Calu3 (cell line): ENCODE measurements at regions of chr1 and their contacts with region 1.

Region 1: DNA sequence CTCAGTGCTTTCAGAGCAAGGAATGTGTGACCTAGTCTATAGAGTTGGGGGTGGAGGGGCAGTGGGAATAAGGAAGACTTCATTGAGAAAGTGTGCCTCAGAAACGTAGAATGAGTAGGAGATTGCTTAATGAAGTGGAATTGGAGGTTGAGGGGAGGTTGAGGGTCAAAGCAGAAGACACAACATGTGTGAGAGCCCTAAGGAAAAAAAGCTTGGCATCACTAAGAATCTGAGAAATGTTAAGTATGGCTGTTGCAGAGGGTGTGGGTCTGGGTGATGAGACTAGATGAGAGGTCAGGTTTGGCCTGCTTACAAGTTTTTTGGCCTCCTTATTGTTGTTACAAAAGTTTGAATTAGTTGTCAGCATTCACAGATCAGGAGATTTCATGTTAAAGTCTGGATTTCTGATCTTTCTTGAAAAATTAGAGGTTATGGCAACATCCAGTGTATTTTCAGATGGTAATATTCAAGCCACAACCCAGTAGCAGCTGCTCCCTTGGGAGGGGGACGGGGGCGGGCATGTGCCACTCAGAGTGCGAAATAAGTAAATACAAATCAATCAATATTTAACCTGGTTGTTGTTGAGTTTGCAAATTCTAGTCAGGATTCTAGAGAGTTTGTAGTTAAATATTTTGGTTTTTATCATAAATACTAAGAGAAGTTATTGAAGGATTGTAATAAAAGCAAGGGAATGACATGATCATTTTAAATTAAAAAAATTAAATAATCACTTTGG is 4.3 kb downstream of the MAN1A2 start:
- DNase-seq: no peak
- H3K4me3 Mint-ChIP-seq: peak overlapping the region; percentile 51
- H3K27ac Mint-ChIP-seq: no peak overlapping the region
- H3K4me1 Mint-ChIP-seq: peaks cover 18% of the 10 kb centered on the region
- H3K27me3 Mint-ChIP-seq: no peaks in the 10 kb centered on the region
- CTCF ChIP-seq: no peak

Region 2: DNA sequence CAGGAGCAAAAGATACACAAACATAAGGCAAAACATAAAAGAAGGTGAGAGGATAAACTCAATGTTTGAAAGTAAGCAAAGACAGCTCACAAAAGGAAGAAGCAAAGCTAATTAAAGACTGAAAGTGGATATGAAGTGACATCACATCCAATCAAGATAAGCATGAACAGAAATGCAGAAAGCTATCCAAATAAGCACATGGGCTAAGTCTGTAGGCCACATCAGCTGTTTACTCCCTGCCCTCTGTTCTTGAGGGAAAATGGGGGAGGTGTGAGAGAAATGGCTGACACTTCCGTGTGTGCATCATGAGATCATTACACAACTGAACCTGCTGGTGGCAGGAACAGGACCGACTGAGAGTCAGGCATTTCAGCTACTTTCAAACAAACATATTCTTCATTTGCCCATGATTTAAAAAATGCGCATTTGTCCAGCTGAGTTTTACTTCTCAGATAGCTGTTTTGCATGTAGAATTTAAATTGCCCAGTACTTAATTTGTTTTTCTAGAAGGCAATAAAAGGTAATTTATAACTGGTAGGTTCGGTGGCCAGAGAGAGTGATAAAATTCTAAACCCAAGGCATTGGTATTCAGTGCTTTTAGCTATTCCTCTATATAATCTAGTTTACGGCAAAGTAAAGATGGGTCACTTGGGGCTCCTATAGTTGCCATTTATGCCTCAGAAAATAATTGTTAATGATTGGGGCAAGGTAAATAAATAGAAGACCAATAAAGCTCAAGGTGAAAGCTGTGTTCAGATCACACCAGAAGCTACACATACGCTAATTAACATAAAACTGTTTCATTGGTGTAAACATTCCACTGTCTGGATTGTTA is 31.5 kb before region 1 on chr1:
- CTCF ChIA-PET with region 1: interaction called, 4 read pairs
- intact Hi-C with region 1: loop called (anchors 1 kb)
- DNase-seq: peak; percentile 29
- H3K4me3 Mint-ChIP-seq: no peak overlapping the region
- H3K27ac Mint-ChIP-seq: peak overlapping the region; percentile 85
- H3K4me1 Mint-ChIP-seq: peaks cover 10% of the 10 kb centered on the region
- H3K27me3 Mint-ChIP-seq: no peaks in the 10 kb centered on the region
- CTCF ChIP-seq: no peak

Region 3: DNA sequence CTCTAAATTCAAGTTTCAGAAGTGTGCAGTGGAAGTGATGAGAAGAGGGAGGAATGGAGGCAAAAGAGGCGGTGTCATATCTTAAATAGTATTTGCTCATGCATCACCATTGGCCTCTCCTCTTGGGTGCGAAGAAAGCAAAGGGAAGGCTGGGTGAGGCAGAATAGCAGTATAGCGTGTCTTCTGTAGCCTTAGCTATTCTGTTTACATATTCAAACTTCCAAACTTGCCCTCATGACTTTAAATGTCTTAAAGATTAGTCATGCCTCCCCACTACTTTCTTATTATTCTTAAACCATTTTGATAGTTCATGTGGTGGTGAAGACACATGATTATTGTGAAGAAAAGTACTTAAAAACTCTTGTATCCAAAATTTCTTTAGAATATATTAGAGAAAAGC is 129.7 kb after region 1 on chr1:
- CTCF ChIA-PET with region 1: no interaction called
- intact Hi-C with region 1: loop called (anchors 10 kb)
- DNase-seq: no peak
- H3K4me3 Mint-ChIP-seq: no peak overlapping the region
- H3K27ac Mint-ChIP-seq: no peak overlapping the region
- H3K4me1 Mint-ChIP-seq: no peaks in the 10 kb centered on the region
- H3K27me3 Mint-ChIP-seq: no peaks in the 10 kb centered on the region
- CTCF ChIP-seq: no peak